Motor neuron (in vitro differentiated cells): ENCODE measurements at regions of chr3 and their contacts with region 1.

Region 1: GRCh38 chr3:126752303-126752842 is 48.3 kb downstream of the CHCHD6 start:
- ATAC-seq: peak; percentile 89 to 99 (median 98)
- H3K4me3 ChIP-seq: no peak overlapping the region
- H3K27ac ChIP-seq: no peak overlapping the region
- H3K4me1 ChIP-seq: peaks cover 25 to 27% of the 10 kb centered on the region in 2 donors

Region 2: GRCh38 chr3:126961191-126961790 is 208.9 kb after region 1 on chr3:
- in situ Hi-C with region 1: loop called in 4 of 9 experiments (anchors 25 kb)
- ATAC-seq: peak in 3 of 8 experiments; percentile 92 to 95 (median 93)
- H3K4me3 ChIP-seq: no peak overlapping the region
- H3K27ac ChIP-seq: no peak overlapping the region
- H3K4me1 ChIP-seq: peaks cover 8 to 16% of the 10 kb centered on the region in 2 donors

Region 3: GRCh38 chr3:126971891-126972351 is 219.5 kb after region 1 on chr3:
- in situ Hi-C with region 1: loop called in 6 of 9 experiments (anchors 10 to 25 kb)
- ATAC-seq: peak; percentile 58 to 94 (median 82)
- H3K4me3 ChIP-seq: no peak overlapping the region
- H3K27ac ChIP-seq: no peak overlapping the region
- H3K4me1 ChIP-seq: peaks cover 3 to 8% of the 10 kb centered on the region in 2 donors

Region 4: GRCh38 chr3:126982471-126983175 is 230.2 kb after region 1 on chr3 and contains the start of gene PLXNA1:
- in situ Hi-C with region 1: loop called in 2 of 9 experiments (anchors 10 to 25 kb)
- ATAC-seq: peak; percentile 49 to 82 (median 68)
- H3K4me3 ChIP-seq: peak within 1 kb of the TSS; percentile 66 to 96 (median 80)
- H3K27ac ChIP-seq: peak within 1 kb of the TSS; percentile 67 to 83
- H3K4me1 ChIP-seq: peaks cover 11 to 18% of the 10 kb centered on the region in 2 donors
- total RNA-seq, gene PLXNA1: 28.2 to 56.1 (median 37.1) TPM

Region 5: GRCh38 chr3:127089486-127090145 is 337.2 kb after region 1 on chr3:
- in situ Hi-C with region 1: loop called in 1 of 9 experiments (anchors 10 kb)
- ATAC-seq: peak in 3 of 8 experiments; percentile 9 to 39 (median 24)
- H3K4me3 ChIP-seq: no peak overlapping the region
- H3K27ac ChIP-seq: no peak overlapping the region
- H3K4me1 ChIP-seq: peaks cover 8 to 24% of the 10 kb centered on the region in 2 donors

Region 6: GRCh38 chr3:127455541-127456450 is 703.4 kb after region 1 on chr3:
- in situ Hi-C with region 1: loop called in 1 of 9 experiments (anchors 25 kb)
- ATAC-seq: peak; percentile 92 to 98 (median 93)
- H3K4me3 ChIP-seq: peak overlapping the region in 4 of 5 donors; percentile 1 to 18 (median 6)
- H3K27ac ChIP-seq: no peak overlapping the region
- H3K4me1 ChIP-seq: peaks cover 31 to 47% of the 10 kb centered on the region in 2 donors